Motor neuron (in vitro differentiated cells): ENCODE measurements at regions of chr1 and their contacts with region 1.

Region 1: DNA sequence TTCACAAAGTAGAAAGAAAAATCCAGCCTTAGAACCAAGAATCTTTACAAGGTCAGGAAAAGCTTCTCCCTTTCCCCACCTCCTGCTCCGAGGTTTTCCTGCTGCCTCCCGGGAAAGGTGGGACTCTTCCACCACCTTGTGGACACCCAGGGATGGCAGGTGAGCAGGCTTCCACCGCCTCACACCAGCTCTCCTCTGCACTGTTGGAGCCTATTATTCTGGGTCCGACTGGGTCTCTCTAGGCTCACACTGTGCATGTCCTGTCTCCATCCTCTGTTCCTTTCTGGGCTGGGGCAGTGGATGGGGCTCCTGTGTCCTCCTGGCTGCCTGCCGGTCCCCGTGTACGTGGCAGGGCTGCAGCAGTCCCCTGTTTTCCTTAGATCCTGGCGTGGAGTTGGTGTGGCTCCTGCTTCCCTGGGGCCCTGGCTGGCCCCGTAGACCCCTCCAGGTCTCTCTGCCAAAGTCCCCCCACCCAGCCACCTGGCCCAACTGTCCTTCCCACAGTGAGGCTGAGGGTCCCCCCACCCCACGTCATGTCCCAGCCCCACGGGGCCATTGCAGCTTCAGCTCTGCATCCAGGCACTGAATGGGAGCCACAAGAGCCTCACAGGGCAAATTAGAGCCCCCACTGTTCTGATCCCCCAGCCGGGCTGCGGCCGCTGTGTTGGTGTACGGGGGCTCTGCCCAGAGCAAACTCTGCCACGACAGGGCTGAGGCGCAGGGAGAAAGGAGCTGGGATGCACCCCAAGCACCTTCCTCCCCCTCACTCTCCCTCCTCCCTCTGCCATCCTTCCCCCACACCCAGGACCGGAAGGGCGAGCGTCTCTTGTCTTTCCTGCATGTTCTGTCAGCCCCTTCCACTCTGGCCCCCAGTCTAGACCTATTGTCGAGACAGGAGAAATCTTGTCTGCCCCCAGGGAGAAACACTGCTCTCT is 3.3 kb upstream of the SLC45A1 start:
- ATAC-seq: peak; percentile 80 to 89 (median 85)
- H3K4me3 ChIP-seq: no peak overlapping the region
- H3K27ac ChIP-seq: no peak overlapping the region
- H3K4me1 ChIP-seq: peaks cover 17 to 20% of the 10 kb centered on the region in 2 donors

Region 2: DNA sequence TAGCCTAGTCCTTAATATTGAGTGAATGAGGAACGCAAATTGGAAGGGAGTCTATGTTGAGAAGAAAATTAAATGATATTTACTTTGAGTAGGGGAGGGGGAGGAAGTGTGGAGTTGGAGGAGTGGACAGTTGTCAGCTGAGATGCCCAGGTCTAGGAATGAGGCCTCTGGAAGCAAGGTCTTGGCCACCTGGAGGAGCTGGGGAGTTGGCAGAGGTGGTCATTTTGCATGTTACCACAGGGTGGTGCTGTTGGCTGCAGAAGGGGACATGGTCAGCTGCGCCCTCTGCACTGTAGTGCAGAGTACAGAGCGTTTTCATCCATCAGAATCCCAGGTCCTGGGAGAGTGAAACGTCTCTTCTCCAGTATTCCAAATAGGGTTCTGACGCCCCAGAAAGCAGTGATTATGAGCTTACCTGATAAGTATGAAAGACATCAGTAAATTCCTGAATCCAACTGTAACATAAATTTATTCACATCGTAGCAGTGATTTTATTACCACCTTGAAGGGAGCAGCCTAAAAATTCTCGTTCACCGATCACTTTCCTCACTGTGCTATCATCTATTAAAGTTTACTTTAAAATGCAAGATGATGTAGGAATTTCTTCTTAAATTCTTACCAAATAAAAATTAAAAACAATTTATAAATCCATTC is 339.3 kb before region 1 on chr1:
- in situ Hi-C with region 1: loop called in 3 of 9 experiments (anchors 10 to 25 kb)
- ATAC-seq: peak; percentile 98 to 100 (median 99)
- H3K4me3 ChIP-seq: no peak overlapping the region
- H3K27ac ChIP-seq: no peak overlapping the region
- H3K4me1 ChIP-seq: peaks cover 0 to 4% of the 10 kb centered on the region in 2 donors

Region 3: DNA sequence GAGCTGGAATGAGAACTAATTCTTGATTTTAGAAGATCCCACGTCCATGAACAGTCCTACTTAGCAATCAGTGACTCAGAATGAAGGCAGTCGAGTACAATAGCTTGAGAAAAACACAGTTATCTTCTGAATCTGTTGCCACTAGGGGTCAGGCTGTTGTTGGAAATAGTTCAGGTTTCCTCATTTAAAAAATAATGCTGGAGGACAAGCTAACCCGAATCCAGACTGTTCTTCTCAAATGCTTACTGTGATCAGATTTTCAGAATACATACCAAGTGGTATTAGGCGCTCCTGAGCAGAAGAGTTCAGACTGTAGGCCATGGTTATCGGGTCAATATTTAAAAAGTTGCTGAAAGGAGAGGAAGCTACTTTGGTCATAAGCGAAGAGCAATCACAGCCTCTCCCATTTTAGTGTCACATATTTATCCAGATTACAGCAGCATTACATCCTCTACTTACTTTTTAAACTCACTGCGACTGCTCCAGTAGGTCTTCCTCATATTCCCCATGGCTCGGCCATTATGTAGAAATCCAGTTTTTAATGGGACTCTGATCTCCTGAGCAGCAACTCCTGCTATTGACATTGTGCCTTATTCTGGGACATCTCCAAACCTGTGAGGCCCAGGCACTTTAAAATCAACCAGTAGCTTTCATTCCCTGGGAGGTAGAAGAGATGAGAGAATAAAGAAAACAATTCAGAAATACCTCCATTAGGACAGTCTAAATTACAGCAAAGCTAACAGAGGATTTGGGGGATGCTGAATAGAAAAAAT is 299.4 kb before region 1 on chr1:
- in situ Hi-C with region 1: loop called in 5 of 9 experiments (anchors 10 to 25 kb)
- ATAC-seq: peak; percentile 50 to 86 (median 56)
- H3K4me3 ChIP-seq: no peak overlapping the region
- H3K27ac ChIP-seq: no peak overlapping the region
- H3K4me1 ChIP-seq: peaks cover 43 to 52% of the 10 kb centered on the region in 2 donors

Region 4: DNA sequence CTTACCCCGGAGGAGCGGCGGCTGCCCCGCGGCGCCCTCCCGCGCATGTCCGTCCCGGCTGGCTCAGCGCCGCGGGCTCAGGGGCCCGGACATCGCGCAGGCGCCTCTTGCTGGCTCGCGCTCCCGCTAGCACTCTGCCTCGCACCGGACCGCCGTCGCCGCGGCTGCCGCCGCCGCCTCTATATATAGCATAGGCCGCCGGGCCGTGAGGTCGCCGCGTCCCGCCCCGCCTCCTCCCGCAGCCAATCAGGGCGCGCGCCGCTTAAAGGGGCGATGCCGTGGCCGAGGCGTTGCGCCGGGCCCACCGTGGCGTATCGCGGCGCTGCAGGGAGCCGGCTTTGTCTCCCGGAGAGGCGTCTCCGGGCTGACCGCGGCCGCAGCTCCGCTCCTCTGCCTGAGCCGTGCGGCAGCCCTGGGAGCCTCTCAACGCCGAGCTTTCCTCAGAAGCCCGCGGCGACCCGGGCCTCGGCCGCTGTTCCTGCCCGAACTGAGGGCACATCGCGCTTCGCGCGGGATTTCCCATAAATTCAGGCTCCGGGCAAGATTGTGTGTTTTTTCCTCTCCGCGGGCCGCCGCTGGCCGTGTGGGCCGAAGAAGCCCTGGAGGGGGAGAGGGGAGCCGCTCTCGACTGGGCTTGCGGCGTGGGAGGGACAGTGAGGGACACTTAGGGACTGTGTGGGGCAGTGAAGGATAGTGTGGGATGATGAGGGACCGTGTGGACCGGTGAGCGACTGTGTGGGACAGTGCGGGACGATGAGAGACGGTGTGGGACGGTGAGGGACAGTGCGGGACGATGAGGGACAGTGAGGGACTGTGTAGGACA is 288.2 kb before region 1 on chr1 and contains the start of gene ERRFI1:
- in situ Hi-C with region 1: loop called in 4 of 9 experiments (anchors 10 to 25 kb)
- ATAC-seq: peak; percentile 85 to 97 (median 88)
- H3K4me3 ChIP-seq: peak within 1 kb of the TSS; percentile 52 to 81 (median 72)
- H3K27ac ChIP-seq: peak within 1 kb of the TSS; percentile 94 to 95
- H3K4me1 ChIP-seq: peaks cover 25 to 30% of the 10 kb centered on the region in 2 donors
- total RNA-seq, gene ERRFI1: 7.2 to 63.4 (median 41.7) TPM

Region 5: GRCh38 chr1:8409106-8409505 is 94.5 kb after region 1 on chr1:
- in situ Hi-C with region 1: no loop called
- ATAC-seq: peak; percentile 71 to 87 (median 78)
- H3K4me3 ChIP-seq: no peak overlapping the region
- H3K27ac ChIP-seq: peak overlapping the region; percentile 1 to 18
- H3K4me1 ChIP-seq: peaks cover 54 to 55% of the 10 kb centered on the region in 2 donors

Region 6: DNA sequence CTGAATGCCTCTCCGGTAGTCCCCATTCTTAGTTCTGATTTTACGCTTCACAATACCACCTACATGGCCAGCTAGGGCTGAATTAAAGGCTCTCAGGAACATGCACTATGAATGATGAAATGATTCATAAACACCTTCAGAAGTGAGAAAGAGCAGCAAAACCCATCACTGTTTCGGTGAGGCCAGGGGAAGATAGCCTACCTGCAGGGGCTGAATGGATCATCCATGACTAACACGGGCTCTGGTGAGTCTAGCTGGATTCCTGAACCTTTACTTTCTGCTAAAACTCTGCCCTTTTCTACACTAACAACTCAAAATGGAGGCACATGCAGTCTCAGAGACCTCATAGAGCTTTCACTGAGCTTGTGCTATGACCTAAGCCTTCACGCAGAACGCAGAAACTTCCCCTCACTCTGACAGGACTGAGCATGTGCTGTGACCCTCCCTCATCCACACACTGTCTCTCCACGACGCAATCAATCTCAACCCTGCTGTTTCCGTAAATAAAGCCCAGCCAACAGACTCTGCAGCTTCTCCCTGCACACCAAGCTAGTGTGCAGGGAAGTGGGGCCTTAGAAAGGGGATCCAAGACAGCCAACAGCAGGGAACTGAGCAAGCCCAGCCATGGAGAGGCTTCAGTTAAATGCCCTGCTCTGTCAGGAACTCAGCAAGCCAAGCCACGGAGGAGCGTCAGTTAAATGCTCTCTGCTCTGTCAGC is 211.1 kb after region 1 on chr1:
- in situ Hi-C with region 1: no loop called
- ATAC-seq: peak; percentile 88 to 99 (median 98)
- H3K4me3 ChIP-seq: peak overlapping the region; percentile 25 to 49 (median 33)
- H3K27ac ChIP-seq: peak overlapping the region; percentile 78 to 81
- H3K4me1 ChIP-seq: peaks cover 20 to 31% of the 10 kb centered on the region in 2 donors